IMR-90 (cell line): ENCODE measurements at regions of chr14 and their contacts with region 1.

Region 1: DNA sequence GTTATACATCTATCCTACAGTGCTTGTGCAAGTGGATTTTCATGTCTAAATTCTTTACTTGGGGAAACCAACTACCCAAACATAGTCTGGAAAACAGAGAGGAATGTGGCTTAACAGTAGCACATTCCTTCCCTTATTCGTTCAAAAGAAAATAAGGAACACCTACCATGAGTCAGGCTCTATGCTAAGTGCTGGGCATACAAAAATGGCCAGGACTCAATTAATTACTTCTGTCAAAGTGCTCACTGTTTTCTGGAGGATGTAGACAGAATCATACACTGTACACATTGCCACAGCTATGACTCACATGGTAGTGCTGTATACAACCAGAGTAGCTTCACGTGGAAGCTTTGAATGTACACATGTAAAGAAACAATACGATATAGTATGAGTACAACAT is 50.2 kb downstream of the SLC25A21 start:
- DNase-seq: peak; percentile 85
- ATAC-seq: peak; percentile 87
- H3K4me3 ChIP-seq: no peak overlapping the region
- H3K27ac ChIP-seq: no peak overlapping the region
- H3K4me1 ChIP-seq: peaks cover 2% of the 10 kb centered on the region; the same call in 1 of the 2 replicates
- H3K27me3 ChIP-seq: no peaks in the 10 kb centered on the region
- CTCF ChIP-seq: no peak
- POLR2A ChIP-seq: no peak
- RAD21 ChIP-seq: no peak

Region 2: GRCh38 chr14:37032863-37033262 is 89.4 kb before region 1 on chr14:
- CTCF ChIA-PET with region 1: interaction called, 11 read pairs
- POLR2A ChIA-PET with region 1: no interaction called
- dilution Hi-C with region 1: no loop called
- in situ Hi-C with region 1: no loop called
- intact Hi-C with region 1: no loop called
- DNase-seq: no peak
- ATAC-seq: no peak
- H3K4me3 ChIP-seq: no peak overlapping the region
- H3K27ac ChIP-seq: no peak overlapping the region
- H3K4me1 ChIP-seq: peaks cover 3% of the 10 kb centered on the region; the same call in 1 of the 2 replicates
- H3K27me3 ChIP-seq: no peaks in the 10 kb centered on the region
- CTCF ChIP-seq: no peak
- POLR2A ChIP-seq: no peak
- RAD21 ChIP-seq: no peak